SK-N-SH (cell line): ENCODE measurements at regions of chr13 and their contacts with region 1.

Region 1: DNA sequence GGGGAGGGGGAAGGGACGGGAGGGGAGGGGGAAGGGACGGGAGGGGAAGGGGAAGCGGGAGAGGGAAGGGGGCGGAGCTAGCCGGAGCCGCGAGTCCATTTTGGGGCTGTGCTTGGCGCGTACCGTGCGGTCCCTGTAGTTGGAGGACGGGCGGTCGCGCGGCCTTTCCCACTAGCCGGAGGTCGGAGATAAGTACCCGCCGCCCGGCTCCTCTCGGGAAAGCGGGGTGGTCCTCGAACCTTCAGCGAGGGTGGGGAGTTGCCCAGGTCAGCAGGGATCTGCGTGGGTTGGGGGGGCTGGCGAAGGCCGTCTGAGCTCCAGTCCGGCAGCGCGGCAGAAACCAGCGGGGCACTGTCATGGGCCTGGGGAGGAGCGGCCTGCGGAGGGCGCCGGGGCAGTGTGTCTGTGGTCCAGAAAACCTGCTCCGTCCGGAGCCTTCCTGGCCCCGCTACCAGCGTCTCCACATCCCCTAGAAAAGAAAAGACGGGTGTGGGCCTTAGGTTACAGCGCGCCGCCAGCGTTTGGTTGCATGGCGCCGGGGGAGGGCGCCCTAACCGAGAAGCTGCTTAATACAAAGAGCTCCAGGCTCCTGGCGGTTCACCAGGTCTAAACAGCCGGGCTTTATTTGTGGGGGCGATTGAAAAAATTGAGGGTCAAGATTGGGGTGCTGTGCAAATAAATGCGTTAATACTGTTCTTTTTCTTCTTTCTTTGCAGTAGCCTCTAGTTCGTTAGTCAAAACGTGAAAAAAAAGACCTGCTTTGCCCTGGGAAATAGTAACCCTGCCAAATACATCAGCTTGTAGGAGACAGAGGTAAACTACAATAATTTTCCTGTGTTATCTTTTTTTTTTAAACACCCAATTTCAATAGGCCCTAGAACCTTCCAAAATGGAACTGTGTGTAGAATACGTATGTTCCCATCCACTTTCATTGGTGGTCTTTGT is at the start of gene TRIM13:
- DNase-seq: peak; percentile 72
- H3K4me3 ChIP-seq: peak within 1 kb of the TSS; percentile 71 to 94
- H3K27ac ChIP-seq: peak within 1 kb of the TSS; percentile 97 to 98
- H3K4me1 ChIP-seq: peaks cover 19 to 29% of the 10 kb centered on the region in 2 experiments; a peak in 3 of 4 replicates
- H3K27me3 ChIP-seq: no peaks in the 10 kb centered on the region
- CTCF ChIP-seq: peak; percentile 86
- EP300 ChIP-seq: no peak
- RAD21 ChIP-seq: peak; percentile 68
- polyA plus RNA-seq, gene TRIM13: 8.3 and 12.9 TPM in 2 replicates

Region 2: DNA sequence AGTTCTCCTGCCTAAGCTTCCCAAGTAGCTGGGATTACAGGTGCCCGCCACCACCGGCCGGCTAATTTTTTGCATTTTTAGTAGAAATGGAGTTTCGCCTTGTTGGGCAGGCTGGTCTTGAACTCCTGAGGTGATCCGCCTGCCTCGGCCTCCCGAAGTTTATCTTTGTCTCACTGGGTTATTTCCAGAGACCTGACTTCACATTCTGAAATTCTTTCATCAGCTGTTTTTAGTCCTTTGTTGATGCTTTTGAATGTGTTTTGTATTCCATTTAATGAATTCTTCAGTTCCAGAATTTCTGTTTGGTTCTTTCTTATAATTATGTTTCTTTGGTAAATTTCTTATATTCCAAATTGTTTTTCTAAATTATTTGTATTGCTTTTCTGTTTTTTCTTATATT is 832.5 kb before region 1 on chr13:
- CTCF ChIA-PET with region 1: no interaction called
- POLR2A ChIA-PET with region 1: no interaction called
- DNase-seq: no peak
- H3K4me3 ChIP-seq: no peak overlapping the region
- H3K27ac ChIP-seq: no peak overlapping the region
- H3K4me1 ChIP-seq: no peaks in the 10 kb centered on the region
- H3K27me3 ChIP-seq: no peaks in the 10 kb centered on the region
- CTCF ChIP-seq: no peak
- EP300 ChIP-seq: no peak
- RAD21 ChIP-seq: no peak

Region 3: DNA sequence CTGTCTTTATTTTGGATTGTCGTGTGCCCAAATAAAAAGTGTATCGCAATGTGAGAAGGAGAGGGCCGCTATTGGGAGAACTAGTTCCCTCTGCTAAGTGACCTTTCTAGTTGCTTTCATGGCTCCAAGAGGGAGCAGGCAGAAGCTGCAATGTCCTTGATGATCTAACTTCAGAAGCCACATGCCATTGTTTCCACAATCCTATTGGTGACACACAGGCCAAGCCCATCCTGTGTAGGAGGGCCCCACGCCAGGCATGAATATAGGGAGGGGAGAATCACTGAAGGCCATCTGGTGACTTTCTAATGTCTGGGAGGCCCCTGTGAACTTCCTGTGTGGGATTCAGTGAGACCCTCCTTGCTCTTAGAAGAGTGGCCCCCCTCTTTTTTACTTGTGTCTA is 157.0 kb before region 1 on chr13:
- CTCF ChIA-PET with region 1: no interaction called
- POLR2A ChIA-PET with region 1: no interaction called
- DNase-seq: no peak
- H3K4me3 ChIP-seq: no peak overlapping the region
- H3K27ac ChIP-seq: no peak overlapping the region
- H3K4me1 ChIP-seq: peaks cover 0 to 7% of the 10 kb centered on the region in 2 experiments; a peak in 1 of 4 replicates
- H3K27me3 ChIP-seq: no peaks in the 10 kb centered on the region
- CTCF ChIP-seq: no peak
- EP300 ChIP-seq: no peak
- RAD21 ChIP-seq: no peak

Region 4: DNA sequence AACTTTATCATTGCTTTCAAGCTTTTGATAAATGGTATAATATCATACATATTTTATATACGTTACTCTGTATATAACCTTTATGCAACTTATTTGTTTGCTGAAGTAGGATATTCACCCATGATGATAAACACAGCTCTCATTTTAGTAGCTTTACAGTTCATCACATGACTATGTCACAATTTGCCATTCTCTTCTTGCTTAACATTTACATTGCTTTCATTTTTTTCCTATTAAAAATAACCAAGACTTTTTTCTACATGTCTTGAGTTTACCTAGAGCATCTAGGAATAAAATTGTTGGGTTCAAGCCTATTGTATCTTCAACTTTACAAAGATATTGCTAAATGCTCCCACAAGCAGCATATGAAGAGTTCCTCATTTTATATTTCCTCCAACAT is 72.0 kb after region 1 on chr13:
- CTCF ChIA-PET with region 1: interaction called, 12 read pairs
- POLR2A ChIA-PET with region 1: interaction called, 10 read pairs
- DNase-seq: no peak
- H3K4me3 ChIP-seq: no peak overlapping the region
- H3K27ac ChIP-seq: peak overlapping the region; percentile 9 to 47; a peak in 3 of 4 replicates
- H3K4me1 ChIP-seq: peaks cover 18 to 40% of the 10 kb centered on the region in 2 experiments; a peak in 3 of 4 replicates
- H3K27me3 ChIP-seq: no peaks in the 10 kb centered on the region
- CTCF ChIP-seq: no peak
- EP300 ChIP-seq: no peak
- RAD21 ChIP-seq: no peak

Region 5: GRCh38 chr13:50075619-50076097 is 78.4 kb after region 1 on chr13:
- CTCF ChIA-PET with region 1: interaction called, 33 read pairs
- POLR2A ChIA-PET with region 1: interaction called, 13 read pairs
- DNase-seq: peak; percentile 32
- H3K4me3 ChIP-seq: peak overlapping the region in 1 of 2 experiments; percentile 36; a peak in 1 of 4 replicates
- H3K27ac ChIP-seq: peak overlapping the region; percentile 51 to 53; a peak in 3 of 4 replicates
- H3K4me1 ChIP-seq: peaks cover 21 to 32% of the 10 kb centered on the region in 2 experiments
- H3K27me3 ChIP-seq: no peaks in the 10 kb centered on the region
- CTCF ChIP-seq: no peak
- EP300 ChIP-seq: peak in 1 of 2 experiments; percentile 72; a peak in 2 of 4 replicates
- RAD21 ChIP-seq: no peak

Region 6: GRCh38 chr13:50685491-50685890 is 688.3 kb after region 1 on chr13:
- CTCF ChIA-PET with region 1: no interaction called
- POLR2A ChIA-PET with region 1: no interaction called
- DNase-seq: no peak
- H3K4me3 ChIP-seq: no peak overlapping the region
- H3K27ac ChIP-seq: peak overlapping the region in 1 of 2 experiments; percentile 60; a peak in 3 of 4 replicates
- H3K4me1 ChIP-seq: peaks cover 7 to 8% of the 10 kb centered on the region in 2 experiments; a peak in 3 of 4 replicates
- H3K27me3 ChIP-seq: no peaks in the 10 kb centered on the region
- CTCF ChIP-seq: no peak
- EP300 ChIP-seq: peak in 1 of 2 experiments; percentile 60; a peak in 2 of 4 replicates
- RAD21 ChIP-seq: no peak